ENCODE measurements at regions of chr12 and their contacts with region 1.

Region 1: GRCh38 chr12:52192173-52192791 is 468 bp upstream of the KRT80 start:
- DNase-seq: peak; percentile 98
- H3K4me3 ChIP-seq: no peak overlapping the region
- CTCF ChIP-seq: no peak

Region 2: GRCh38 chr12:52181746-52182145 is 10.5 kb before region 1 on chr12:
- CTCF ChIA-PET with region 1: interaction called, 18 read pairs
- POLR2A ChIA-PET with region 1: interaction called, 7 read pairs
- DNase-seq: no peak
- H3K4me3 ChIP-seq: no peak overlapping the region; the same call in 1 of the 2 replicates
- CTCF ChIP-seq: no peak

Region 3: DNA sequence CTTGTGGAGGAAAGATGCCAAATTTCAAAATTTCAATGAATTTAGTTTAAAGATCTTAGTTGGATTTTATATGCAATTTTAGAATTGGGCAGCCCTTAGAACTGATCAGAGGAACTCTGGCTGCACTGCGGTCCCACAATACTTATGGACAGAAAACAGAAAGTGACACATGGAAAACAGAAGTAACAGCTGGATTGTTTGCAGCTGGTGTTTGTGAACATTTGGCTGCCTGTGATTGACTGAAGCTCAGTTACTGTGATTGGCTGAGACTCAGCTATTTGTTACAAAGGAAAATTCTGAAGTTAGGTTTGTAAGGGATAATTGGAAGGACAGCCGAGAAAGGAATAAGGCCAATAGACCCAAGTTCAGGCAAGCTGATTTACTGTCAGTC is 72.1 kb after region 1 on chr12:
- CTCF ChIA-PET with region 1: no interaction called
- POLR2A ChIA-PET with region 1: no interaction called
- DNase-seq: no peak
- H3K4me3 ChIP-seq: no peak overlapping the region
- CTCF ChIP-seq: no peak

Measured in AG04449 (cell line).